Right ventricle myocardium superior (tissue), 1 donor: ENCODE measurements at regions of chr12 and their contacts with region 1.

Region 1: GRCh38 chr12:42023733-42024494 is 120.8 kb downstream of the GXYLT1 start:
- DNase-seq: peak; percentile 79
- ATAC-seq: peak; percentile 95

Region 2: GRCh38 chr12:40946612-40947194 is 1077.2 kb before region 1 on chr12:
- intact Hi-C with region 1: loop called (anchors 10 kb)
- DNase-seq: no peak
- ATAC-seq: no peak

Region 3: DNA sequence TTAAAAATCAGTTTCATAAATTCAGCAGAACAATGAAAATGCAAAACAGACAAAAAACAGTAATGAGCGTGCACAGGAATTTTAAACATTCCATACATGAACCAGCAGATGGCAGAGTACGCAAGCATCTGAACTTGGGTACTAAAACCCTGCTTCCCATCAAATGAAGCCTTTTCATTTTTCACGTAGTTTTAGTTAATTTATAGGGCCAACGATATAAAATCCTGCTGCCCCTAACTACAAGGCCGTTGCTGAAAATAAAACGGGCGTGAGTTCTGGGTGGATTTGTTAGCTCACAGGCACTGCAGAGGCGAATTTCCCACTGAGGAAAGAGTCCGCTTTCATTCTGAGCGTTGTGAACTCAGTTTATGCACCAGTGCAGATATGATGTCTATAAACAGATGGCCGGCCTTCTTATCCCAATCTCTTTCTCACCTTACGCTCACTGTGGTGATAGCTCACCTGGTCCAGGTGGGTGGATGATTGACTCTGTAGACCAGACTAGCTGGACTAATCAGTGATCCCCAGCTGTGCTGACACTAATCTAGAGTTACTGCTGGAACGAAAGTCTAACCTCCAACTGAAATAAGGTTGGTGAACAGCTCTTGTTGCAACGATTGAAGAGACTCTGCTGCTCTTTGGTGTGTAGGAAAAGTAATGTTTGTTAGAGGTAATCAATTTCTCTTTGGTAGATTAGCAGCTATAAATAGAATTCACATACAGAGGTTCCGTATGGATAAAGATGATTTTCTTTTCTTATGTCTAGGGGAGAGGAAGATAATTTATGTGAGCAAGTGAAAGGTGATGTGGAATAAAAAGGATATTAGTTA is 746.6 kb before region 1 on chr12:
- intact Hi-C with region 1: loop called (anchors 2 kb)
- DNase-seq: no peak
- ATAC-seq: no peak